Mammary epithelial cell (primary cell): ENCODE measurements at regions of chr10 and their contacts with region 1.

Region 1: GRCh38 chr10:46556515-46557315 is at the start of gene GPRIN2:
- DNase-seq: no peak
- H3K4me3 ChIP-seq: peak within 1 kb of the TSS; percentile 22 to 53 (median 45)
- H3K27ac ChIP-seq: no peak within 1 kb of the TSS
- H3K4me1 ChIP-seq: peaks cover 6% of the 10 kb centered on the region
- H3K27me3 ChIP-seq: peaks cover 24% of the 10 kb centered on the region
- CTCF ChIP-seq: no peak
- total RNA-seq, gene GPRIN2: 0.54 to 3.7 TPM

Region 2: DNA sequence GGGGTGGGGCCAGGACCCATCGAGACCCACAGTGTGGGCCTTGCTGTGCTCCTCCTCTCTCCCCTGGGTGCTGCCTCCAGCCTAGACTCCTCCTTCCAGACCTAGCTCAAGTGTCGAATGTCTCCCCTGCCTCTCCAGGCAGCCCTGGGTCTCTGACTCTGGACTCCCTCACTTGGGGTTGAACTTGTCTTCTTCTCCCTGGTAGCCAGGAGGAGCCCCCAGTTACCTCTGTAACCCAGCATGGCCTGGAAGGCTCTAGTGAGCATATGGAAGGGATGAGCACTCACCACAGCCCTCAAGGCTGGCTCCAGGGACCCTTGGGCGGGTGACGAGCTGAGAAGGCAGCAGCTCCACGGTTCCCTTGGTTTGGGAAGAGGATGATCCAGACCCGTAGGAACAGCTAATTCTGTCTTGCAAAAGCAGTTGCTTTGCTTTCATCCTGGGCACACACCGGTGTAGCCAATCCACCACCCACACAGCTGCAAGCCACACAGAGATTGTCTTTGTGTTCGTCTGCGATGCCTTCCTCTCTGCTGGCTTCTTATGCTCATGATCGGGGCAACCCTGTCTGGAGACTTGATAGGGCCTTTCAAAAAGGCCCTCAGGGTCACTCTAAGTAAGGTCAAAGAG is 322.2 kb before region 1 on chr10:
- CTCF ChIA-PET with region 1: no interaction called
- dilution Hi-C with region 1: no loop called
- in situ Hi-C with region 1: no loop called
- intact Hi-C with region 1: loop called (anchors 10 kb)
- DNase-seq: no peak
- H3K4me3 ChIP-seq: no peak overlapping the region
- H3K27ac ChIP-seq: no peak overlapping the region
- H3K4me1 ChIP-seq: no peaks in the 10 kb centered on the region
- H3K27me3 ChIP-seq: no peaks in the 10 kb centered on the region
- CTCF ChIP-seq: no peak

Region 3: DNA sequence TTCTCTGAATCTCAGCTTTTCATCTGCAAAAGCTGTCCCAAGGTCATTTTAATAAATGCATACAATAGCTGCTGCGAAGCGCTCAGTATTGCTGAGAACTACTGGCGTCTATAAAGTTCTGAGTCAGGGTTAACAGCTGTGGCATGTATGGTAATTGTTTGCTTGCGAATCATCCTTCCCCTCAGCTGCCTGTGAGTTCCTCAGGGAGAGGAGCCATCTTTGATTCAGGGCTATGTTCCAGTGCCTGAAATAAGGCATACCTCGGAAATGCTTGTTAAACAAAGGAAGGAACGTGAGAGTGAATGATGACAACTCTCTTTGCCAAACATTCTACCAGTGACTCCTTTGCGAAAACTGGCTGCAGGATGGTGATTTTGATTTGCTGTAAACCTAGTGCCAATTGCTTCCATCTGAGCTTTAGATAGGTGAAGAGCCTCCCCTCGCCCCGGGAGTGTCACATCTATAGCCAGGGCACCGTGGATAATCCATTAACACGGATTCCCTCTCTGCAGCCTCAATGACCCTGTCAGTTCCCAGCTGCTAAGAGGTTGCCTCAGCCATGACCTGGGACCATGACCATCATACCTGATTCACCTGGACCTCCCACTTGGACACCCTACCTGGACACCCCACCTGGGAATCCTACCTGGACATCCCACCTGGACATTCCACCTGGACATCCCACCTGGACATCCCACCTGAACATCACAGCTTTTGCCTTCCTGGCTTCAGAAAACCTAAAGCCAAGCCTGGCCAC is 39.9 kb before region 1 on chr10:
- CTCF ChIA-PET with region 1: no interaction called
- dilution Hi-C with region 1: no loop called
- in situ Hi-C with region 1: no loop called
- intact Hi-C with region 1: no loop called
- DNase-seq: peak; percentile 87
- H3K4me3 ChIP-seq: no peak overlapping the region
- H3K27ac ChIP-seq: no peak overlapping the region
- H3K4me1 ChIP-seq: peaks cover 26% of the 10 kb centered on the region
- H3K27me3 ChIP-seq: no peaks in the 10 kb centered on the region
- CTCF ChIP-seq: no peak

Region 4: DNA sequence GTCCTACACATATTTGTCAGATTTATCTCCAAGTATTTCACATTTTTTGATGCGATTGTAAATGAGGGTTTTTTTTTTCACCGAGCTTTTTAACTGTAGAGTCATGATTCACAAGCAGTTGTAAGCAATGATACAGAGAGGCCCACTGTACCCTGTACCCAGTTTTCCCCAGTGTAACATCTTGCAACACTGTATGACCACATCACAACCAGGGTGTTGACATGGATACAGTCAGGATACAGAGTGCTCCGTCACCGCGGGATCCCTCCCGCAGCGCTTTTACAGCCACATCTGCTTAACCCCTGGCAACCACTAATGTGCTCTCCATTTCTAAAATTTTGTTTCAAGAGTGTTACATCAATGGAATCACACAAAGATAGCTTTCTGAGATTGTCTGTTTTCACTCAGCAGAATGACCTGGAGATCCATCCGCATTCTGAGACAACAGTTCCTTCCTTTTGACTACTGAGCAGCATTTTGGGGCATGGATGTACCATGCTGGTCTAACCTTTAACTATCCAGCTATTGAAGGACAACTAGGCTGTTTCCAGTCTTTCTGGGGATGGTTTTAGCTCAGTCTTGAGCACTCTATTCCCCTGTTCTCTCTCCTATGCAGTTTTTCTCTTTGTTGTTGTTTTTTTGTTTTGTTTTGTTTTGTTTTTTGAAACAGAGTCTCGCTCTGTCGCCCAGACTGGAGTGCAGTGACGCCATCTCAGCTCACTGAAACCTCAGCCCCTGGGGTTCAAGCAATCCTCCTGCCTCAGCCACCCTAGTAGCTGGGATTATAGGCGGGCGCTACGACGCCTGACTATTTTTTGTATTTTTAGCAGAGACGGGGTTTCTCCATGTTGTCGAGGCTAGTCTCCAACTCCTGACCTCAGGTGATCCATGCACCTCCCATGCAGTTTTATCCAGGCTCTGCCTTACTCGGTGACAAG is 26.2 kb before region 1 on chr10:
- CTCF ChIA-PET with region 1: no interaction called
- dilution Hi-C with region 1: no loop called
- in situ Hi-C with region 1: no loop called
- intact Hi-C with region 1: no loop called
- DNase-seq: no peak
- H3K4me3 ChIP-seq: no peak overlapping the region
- H3K27ac ChIP-seq: no peak overlapping the region
- H3K4me1 ChIP-seq: peaks cover 4% of the 10 kb centered on the region
- H3K27me3 ChIP-seq: no peaks in the 10 kb centered on the region
- CTCF ChIP-seq: no peak

Region 5: GRCh38 chr10:46787321-46787615 is 230.6 kb after region 1 on chr10:
- CTCF ChIA-PET with region 1: no interaction called
- dilution Hi-C with region 1: no loop called
- in situ Hi-C with region 1: no loop called
- intact Hi-C with region 1: no loop called
- DNase-seq: peak; percentile 42
- H3K4me3 ChIP-seq: peak overlapping the region; percentile 64 to 84 (median 70)
- H3K27ac ChIP-seq: peak overlapping the region; percentile 32
- H3K4me1 ChIP-seq: no peaks in the 10 kb centered on the region
- H3K27me3 ChIP-seq: no peaks in the 10 kb centered on the region
- CTCF ChIP-seq: peak in 1 of 2 donors; percentile 42